Activated CD4-positive, alpha-beta T cell treated with anti-CD3 and anti-CD28 coated beads, Interleukin-2, amount 10 ng/mL, durations not matched to agents 24 days and 14 days (primary cell): ENCODE measurements at regions of chr6 and their contacts with region 1.

Region 1: GRCh38 chr6:111764238-111765175 is 108.7 kb downstream of the FYN start:
- DNase-seq: peak; percentile 82
- H3K4me3 Mint-ChIP-seq: peak overlapping the region; percentile 57
- H3K27ac Mint-ChIP-seq: peak overlapping the region; percentile 98
- H3K4me1 Mint-ChIP-seq: peaks cover 96% of the 10 kb centered on the region
- H3K27me3 Mint-ChIP-seq: no peaks in the 10 kb centered on the region

Region 2: GRCh38 chr6:111715321-111715720 is 49.2 kb before region 1 on chr6:
- intact Hi-C with region 1: loop called (anchors 2 kb)
- DNase-seq: peak; percentile 79
- H3K4me3 Mint-ChIP-seq: peak overlapping the region; percentile 67
- H3K27ac Mint-ChIP-seq: peak overlapping the region; percentile 92
- H3K4me1 Mint-ChIP-seq: peaks cover 62% of the 10 kb centered on the region
- H3K27me3 Mint-ChIP-seq: no peaks in the 10 kb centered on the region

Region 3: GRCh38 chr6:111781041-111781708 is 16.7 kb after region 1 on chr6:
- intact Hi-C with region 1: loop called (anchors 1 kb)
- DNase-seq: no peak
- H3K4me3 Mint-ChIP-seq: no peak overlapping the region
- H3K27ac Mint-ChIP-seq: peak overlapping the region; percentile 19
- H3K4me1 Mint-ChIP-seq: peaks cover 78% of the 10 kb centered on the region
- H3K27me3 Mint-ChIP-seq: no peaks in the 10 kb centered on the region

Region 4: GRCh38 chr6:111804627-111805235 is 40.2 kb after region 1 on chr6:
- intact Hi-C with region 1: loop called (anchors 1 kb)
- DNase-seq: peak; percentile 90
- H3K4me3 Mint-ChIP-seq: peak overlapping the region; percentile 82
- H3K27ac Mint-ChIP-seq: peak overlapping the region; percentile 99
- H3K4me1 Mint-ChIP-seq: peaks cover 82% of the 10 kb centered on the region
- H3K27me3 Mint-ChIP-seq: no peaks in the 10 kb centered on the region

Region 5: GRCh38 chr6:111850295-111850937 is 85.9 kb after region 1 on chr6:
- intact Hi-C with region 1: loop called (anchors 1 kb)
- DNase-seq: no peak
- H3K4me3 Mint-ChIP-seq: peak overlapping the region; percentile 51
- H3K27ac Mint-ChIP-seq: peak overlapping the region; percentile 73
- H3K4me1 Mint-ChIP-seq: peaks cover 79% of the 10 kb centered on the region
- H3K27me3 Mint-ChIP-seq: no peaks in the 10 kb centered on the region

Region 6: DNA sequence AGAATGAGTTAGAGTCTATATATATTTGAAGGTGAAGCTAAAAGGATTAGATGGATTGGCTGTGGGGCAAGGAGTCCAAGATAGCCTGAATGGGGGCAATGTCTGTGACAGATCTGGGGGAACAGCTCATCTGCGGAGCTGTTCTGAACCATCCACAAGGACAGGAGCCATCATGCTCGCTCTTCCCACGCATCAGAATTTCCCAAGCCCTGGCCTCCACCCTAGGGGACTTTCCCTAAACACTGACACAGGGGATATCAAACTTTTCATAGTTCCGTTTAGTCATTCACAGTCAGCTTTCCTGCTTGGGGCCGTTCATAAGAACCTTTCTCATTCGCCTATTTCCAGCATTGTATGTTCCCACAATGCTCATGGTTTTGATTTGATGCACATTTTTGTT is 251.8 kb after region 1 on chr6:
- intact Hi-C with region 1: loop called (anchors 2 kb)
- DNase-seq: peak; percentile 71
- H3K4me3 Mint-ChIP-seq: peak overlapping the region; percentile 33
- H3K27ac Mint-ChIP-seq: peak overlapping the region; percentile 90
- H3K4me1 Mint-ChIP-seq: peaks cover 52% of the 10 kb centered on the region
- H3K27me3 Mint-ChIP-seq: no peaks in the 10 kb centered on the region

Region 7: DNA sequence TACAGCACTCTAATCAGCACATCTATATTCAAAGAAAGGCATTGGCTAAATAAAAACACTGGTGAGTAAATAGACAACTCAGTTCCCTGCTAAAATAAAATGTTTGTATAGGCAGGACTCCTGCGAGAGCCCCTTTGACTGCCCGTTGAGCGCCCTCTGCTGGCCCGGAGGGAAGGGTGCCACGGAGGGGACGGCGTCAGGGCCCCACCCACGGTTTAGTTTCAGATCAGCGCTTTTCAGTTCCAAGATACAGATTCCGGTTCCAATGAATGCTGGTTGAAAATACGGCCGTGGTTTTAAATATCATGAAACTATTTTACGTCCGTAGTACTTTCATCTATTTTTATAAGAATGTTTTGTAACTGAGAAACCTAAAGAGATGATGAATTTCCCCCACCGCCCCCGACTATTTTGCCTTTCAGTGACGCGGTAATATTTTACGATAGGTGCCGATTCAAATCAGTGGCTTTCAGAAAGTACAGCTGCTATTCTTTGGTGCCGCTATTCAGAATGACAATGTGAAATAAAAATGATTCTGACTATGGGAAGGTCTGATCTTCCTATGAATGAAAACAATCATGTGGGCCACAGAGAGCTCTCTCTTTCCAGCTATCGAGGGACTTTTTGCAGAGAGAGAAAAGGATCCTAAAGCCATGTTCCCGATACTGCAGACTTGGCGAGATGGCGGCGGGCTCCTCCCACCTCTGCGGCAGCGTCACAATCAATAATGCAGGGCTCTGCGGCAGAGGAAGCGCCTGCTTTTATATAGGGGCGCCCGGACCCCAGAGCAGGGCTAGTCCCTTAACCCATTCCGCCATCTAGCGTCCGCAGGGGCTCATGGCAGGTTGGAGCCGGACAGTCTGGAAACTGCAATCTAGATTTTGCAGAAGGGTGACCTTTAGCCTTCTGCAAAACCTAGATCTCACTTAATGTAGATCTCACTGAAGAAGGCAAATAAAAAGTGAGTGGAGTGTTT is 278.8 kb after region 1 on chr6:
- intact Hi-C with region 1: loop called (anchors 1 kb)
- DNase-seq: peak; percentile 97
- H3K4me3 Mint-ChIP-seq: peak overlapping the region; percentile 93
- H3K27ac Mint-ChIP-seq: peak overlapping the region; percentile 96
- H3K4me1 Mint-ChIP-seq: peaks cover 24% of the 10 kb centered on the region
- H3K27me3 Mint-ChIP-seq: no peaks in the 10 kb centered on the region